Activated CD8-positive, alpha-beta T cell treated with anti-CD3 and anti-CD28 coated beads, Interleukin-2, amount 10 ng/mL, durations not matched to agents 7 days and 5 days (primary cell): ENCODE measurements at regions of chr1 and their contacts with region 1.

Region 1: DNA sequence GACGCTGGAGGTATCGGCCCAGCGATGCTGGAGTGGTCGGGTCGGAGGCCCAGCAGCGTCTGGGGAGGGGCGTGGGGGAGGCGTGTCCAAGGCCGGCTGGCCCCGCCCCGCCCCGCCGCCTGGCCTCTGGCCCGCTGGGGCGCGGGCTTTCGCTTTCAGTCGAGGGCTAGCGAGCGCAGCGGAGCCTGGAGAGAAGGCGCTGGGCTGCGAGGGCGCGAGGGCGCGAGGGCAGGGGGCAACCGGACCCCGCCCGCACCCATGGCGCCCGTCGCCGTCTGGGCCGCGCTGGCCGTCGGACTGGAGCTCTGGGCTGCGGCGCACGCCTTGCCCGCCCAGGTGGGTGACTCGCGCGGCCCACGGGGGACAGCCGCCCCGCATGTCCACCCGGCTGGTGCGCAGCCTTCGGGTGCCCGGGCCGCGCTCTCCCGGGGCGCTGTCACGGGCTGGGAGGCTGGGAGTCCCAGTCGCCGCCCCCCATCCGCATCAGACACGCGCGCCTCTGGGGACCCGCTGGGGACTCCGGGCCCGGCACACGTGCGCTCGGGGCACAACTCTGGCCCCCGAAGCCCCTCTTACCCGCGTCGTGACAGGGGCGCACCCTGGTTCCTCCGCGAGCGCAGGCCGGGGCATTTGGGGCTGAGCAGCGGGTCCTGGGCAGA is at the start of gene TNFRSF1B:
- DNase-seq: peak; percentile 74
- ATAC-seq: peak; percentile 67
- H3K4me3 Mint-ChIP-seq: peak within 1 kb of the TSS; percentile 100
- H3K27ac Mint-ChIP-seq: peak within 1 kb of the TSS; percentile 97
- H3K4me1 Mint-ChIP-seq: peaks cover 77% of the 10 kb centered on the region
- H3K27me3 Mint-ChIP-seq: no peaks in the 10 kb centered on the region
- total RNA-seq, gene TNFRSF1B: 274 to 284 TPM

Region 2: DNA sequence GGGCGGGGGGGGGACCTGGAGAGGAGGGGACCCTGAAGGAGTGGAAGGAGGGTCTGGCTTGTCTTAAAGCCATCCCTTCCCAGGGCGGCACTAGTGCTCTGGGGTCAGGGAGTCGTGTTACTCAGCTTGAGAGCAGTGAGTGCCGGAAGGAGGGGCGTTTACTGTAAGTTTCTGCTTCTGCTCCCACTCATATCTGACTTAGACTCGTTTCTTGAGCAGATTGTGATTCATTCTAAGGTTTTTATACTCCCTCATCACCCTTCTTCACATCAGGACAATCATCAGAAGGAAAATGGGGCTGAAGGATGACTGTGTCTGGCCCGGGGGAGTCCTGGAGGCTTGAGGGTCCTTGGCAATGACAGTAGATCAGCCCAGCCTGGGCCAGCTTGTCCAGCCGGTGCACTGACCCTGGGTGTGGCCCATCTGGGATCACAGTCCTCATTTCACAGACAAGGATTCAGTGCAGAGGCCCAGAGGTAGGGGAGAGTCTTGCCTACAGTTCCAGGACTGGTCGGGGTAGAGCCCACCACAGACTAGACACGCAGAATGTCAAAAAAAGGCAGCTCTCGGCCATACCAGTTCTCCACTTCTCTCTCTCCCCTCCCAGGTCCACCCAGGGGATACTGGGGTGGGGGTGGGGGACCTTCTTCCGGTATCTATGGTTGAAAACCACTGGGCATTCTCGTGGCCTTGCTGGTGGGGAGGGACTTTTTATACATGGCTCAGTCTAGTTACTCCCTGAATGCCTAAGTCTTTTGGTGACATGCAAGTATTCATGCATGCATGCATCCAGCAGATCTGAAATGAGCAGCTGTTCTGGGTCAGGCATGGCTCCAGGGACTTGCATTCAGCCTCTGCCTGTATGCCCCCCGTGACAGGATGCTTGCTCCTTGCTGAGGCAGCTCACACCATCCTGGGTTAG is 98.8 kb before region 1 on chr1:
- CTCF ChIA-PET with region 1: no interaction called
- POLR2A ChIA-PET with region 1: no interaction called
- DNase-seq: peak; percentile 50
- ATAC-seq: no peak
- H3K4me3 Mint-ChIP-seq: no peak overlapping the region
- H3K27ac Mint-ChIP-seq: peak overlapping the region; percentile 44
- H3K4me1 Mint-ChIP-seq: peaks cover 57% of the 10 kb centered on the region
- H3K27me3 Mint-ChIP-seq: peaks cover 44% of the 10 kb centered on the region

Region 3: DNA sequence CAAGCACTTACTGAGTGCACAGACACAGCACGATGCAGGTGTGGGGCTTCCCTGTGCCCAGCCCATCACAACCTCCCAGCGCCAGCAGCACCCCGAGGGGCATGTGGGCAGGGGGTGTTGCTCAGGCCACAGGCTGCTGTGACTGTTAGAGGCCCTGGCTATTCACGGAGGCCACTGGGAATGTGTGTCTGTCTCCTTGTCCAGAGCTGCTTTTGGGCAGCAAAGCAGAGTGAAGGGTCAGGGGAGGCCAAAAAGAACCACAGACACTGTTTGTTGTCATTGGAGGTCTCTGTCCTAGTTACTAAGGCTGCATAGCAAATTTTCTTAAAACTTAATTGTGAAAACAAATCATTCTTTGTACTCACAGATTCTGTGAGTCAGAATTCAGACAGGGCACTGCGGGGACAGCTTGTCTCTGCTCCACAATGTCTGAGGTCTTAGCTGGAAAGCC is 54.2 kb before region 1 on chr1:
- CTCF ChIA-PET with region 1: no interaction called
- POLR2A ChIA-PET with region 1: no interaction called
- DNase-seq: no peak
- ATAC-seq: no peak
- H3K4me3 Mint-ChIP-seq: no peak overlapping the region
- H3K27ac Mint-ChIP-seq: no peak overlapping the region
- H3K4me1 Mint-ChIP-seq: peaks cover 16% of the 10 kb centered on the region
- H3K27me3 Mint-ChIP-seq: no peaks in the 10 kb centered on the region

Region 4: GRCh38 chr1:12152113-12152891 is 14.7 kb before region 1 on chr1:
- CTCF ChIA-PET with region 1: interaction called, 18 read pairs
- POLR2A ChIA-PET with region 1: interaction called, 42 read pairs
- DNase-seq: no peak
- ATAC-seq: no peak
- H3K4me3 Mint-ChIP-seq: peak overlapping the region; percentile 6
- H3K27ac Mint-ChIP-seq: peak overlapping the region; percentile 95
- H3K4me1 Mint-ChIP-seq: peaks cover 94% of the 10 kb centered on the region
- H3K27me3 Mint-ChIP-seq: no peaks in the 10 kb centered on the region